ENCODE measurements at regions of chr5 and their contacts with region 1.

Region 1: DNA sequence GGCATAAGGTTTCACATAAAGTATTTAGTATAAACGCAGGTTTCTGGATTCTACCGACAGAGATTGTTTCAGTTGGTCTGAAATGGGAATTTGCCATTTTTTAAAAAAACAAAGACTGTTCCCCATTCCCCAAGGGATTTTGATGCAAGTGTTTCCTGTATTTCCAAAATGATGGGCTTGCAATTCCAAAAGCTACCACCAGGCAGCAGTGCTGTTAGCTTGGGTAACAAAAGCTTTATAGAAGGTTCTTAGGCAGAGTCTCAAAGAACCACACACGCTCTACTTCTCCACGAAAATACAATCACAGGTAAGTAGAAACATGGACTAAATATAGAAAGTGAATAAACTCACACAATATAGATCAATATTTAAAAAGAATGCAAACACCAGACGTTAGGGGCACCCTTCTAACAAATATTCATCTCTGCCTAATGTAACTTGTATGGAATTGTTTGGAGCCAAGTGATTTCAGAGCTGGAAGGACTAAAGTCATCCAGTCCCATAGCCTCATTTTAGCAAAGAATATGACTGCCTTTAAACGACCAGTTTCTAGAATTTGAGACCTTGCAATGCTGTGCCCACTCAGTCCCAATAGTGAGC is 154.3 kb downstream of the SPOCK1 start:
- DNase-seq: peak in 1 of 2 donors; percentile 44
- ATAC-seq: peak in 1 of 2 donors; percentile 61
- H3K4me3 ChIP-seq: no peak overlapping the region
- H3K27ac ChIP-seq: no peak overlapping the region
- H3K4me1 ChIP-seq: no peaks in the 10 kb centered on the region
- H3K27me3 ChIP-seq: no peaks in the 10 kb centered on the region
- CTCF ChIP-seq: peak; percentile 64 to 74 (median 73)
- POLR2A ChIP-seq: no peak

Region 2: DNA sequence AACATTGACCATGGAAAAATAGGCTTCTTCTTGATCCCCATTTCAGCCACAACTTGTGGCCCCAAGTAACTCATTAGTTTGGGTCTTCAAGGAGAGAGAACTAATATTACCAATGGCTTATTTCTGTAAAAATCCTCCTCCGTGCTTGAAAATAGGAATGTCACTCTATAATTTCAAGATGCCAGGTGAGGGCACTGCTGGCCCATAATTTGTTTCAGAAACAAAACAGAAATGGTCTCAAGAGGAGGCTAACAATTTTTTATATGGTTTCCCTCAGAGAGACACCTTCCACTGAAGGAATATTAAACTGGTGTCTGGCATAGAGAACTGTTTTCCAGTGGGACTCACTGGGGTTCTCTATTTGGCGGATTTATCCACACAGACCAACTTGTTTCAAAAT is 542.4 kb before region 1 on chr5:
- in situ Hi-C with region 1: no loop called
- intact Hi-C with region 1: loop called (anchors 10 kb)
- DNase-seq: peak in 1 of 2 donors; percentile 14
- ATAC-seq: peak in 1 of 2 donors; percentile 52
- H3K4me3 ChIP-seq: no peak overlapping the region
- H3K27ac ChIP-seq: no peak overlapping the region
- H3K4me1 ChIP-seq: no peaks in the 10 kb centered on the region
- H3K27me3 ChIP-seq: no peaks in the 10 kb centered on the region
- CTCF ChIP-seq: peak in 3 of 5 experiments; percentile 15 to 46 (median 37)
- POLR2A ChIP-seq: no peak

Region 3: DNA sequence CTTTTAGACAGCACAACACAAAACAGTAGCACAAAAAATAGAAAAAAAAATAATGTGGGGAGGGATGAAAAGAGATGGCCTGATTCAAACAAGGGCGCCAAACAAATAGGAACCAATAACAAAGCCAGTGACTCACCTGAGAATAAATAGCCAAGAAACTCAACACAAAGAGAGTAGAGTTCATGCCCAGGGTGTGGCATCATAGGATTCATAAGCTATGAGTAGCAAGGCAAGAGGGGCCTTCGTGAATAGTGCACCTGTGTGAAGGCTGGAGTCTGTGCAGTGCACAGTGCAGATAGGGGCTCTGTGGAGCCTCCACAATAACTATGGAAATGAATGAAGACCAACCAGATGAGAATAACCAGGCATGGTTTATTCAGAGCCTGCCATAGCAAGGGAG is 387.4 kb before region 1 on chr5:
- in situ Hi-C with region 1: no loop called
- intact Hi-C with region 1: no loop called
- DNase-seq: no peak
- ATAC-seq: no peak
- H3K4me3 ChIP-seq: no peak overlapping the region
- H3K27ac ChIP-seq: no peak overlapping the region
- H3K4me1 ChIP-seq: no peaks in the 10 kb centered on the region
- H3K27me3 ChIP-seq: no peaks in the 10 kb centered on the region
- CTCF ChIP-seq: no peak
- POLR2A ChIP-seq: no peak

Region 4: DNA sequence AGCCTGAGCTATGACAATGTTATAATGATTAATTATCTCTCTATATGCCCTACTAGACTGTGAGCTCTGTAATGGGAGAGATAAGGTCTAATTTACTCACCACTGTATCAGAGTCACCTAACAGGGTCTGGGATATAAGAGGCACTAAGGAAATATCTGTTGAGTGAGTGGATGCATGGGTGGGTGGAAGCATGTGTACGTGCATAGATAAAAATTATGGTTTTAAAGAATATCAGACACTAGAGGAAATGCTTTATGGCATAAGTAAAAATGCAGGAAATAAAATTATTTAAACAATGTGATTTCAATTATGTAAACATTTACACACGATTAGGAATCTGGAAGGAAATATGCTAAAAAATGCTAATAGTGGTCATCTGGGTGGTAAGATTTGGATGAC is 16.5 kb after region 1 on chr5:
- in situ Hi-C with region 1: no loop called
- intact Hi-C with region 1: no loop called
- DNase-seq: no peak
- ATAC-seq: no peak
- H3K4me3 ChIP-seq: no peak overlapping the region
- H3K27ac ChIP-seq: no peak overlapping the region
- H3K4me1 ChIP-seq: no peaks in the 10 kb centered on the region
- H3K27me3 ChIP-seq: no peaks in the 10 kb centered on the region
- CTCF ChIP-seq: no peak
- POLR2A ChIP-seq: no peak

Region 5: GRCh38 chr5:137487600-137487999 is 142.8 kb after region 1 on chr5:
- in situ Hi-C with region 1: loop called in 1 of 4 experiments (anchors 10 kb)
- intact Hi-C with region 1: no loop called
- DNase-seq: peak; percentile 36 to 56
- ATAC-seq: peak; percentile 67 to 71
- H3K4me3 ChIP-seq: no peak overlapping the region
- H3K27ac ChIP-seq: peak overlapping the region in 2 of 4 donors; percentile 3 to 10
- H3K4me1 ChIP-seq: no peaks in the 10 kb centered on the region
- H3K27me3 ChIP-seq: no peaks in the 10 kb centered on the region
- CTCF ChIP-seq: no peak
- POLR2A ChIP-seq: no peak

Measured in gastrocnemius medialis (tissue), 4 donors.